GM10248 (cell line): ENCODE measurements at regions of chr3 and their contacts with region 1.

Region 1: DNA sequence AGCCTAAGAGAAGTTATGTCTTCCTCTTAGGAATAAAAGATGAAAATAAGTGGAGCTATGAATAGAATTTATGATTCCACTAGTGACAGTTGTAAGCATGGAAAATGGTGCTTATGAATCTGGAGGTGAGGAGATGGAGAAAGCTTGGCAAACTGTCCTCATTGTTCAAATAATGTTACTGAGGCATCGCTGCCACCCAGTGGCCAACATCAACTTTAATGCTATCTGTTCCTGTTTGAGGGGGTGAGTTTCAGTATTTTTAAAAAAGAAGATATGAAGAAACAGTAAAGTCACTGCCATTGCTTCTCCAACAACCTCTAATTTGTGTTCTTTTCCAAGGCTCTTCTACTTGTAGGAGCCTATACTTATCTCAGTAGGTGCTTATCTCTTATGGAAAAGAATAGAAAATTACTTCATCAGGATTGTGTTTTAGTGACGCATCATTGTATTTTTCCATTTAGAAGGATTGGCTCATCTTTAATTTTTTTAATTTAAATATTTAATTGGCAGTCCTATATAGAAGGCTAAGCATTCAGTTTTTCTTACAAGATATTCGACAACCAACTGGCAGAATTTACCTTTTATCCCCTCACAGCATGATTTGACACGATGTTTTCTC is 260.4 kb upstream of the P2RY1 start:
- DNase-seq: peak; percentile 26
- CTCF ChIP-seq: peak; percentile 54

Region 2: DNA sequence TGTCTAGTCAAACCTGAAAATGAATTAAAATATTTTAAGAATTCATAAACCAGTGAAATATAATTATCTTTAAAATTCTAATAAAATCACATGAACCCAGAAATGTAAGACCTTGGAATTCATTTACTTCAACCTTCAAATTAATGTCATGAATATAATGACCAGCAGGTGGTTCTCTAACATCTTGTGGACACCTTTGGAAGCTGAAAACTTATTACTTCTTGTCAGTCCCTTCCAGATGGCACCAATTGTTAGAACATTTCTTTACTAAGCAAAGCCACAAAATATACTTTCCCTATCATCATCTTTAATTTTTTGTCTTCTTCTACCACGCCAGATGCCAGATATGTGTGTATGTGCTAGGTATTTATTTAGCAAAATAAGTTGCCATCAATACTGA is 65.9 kb before region 1 on chr3:
- CTCF ChIA-PET with region 1: interaction called, 22 read pairs
- POLR2A ChIA-PET with region 1: no interaction called
- DNase-seq: no peak
- CTCF ChIP-seq: peak; percentile 37

Region 3: GRCh38 chr3:152556731-152557254 is 17.8 kb before region 1 on chr3:
- CTCF ChIA-PET with region 1: interaction called, 14 read pairs
- POLR2A ChIA-PET with region 1: no interaction called
- DNase-seq: peak; percentile 38
- CTCF ChIP-seq: no peak